AG04450 (cell line): ENCODE measurements at regions of chr7 and their contacts with region 1.

Region 1: GRCh38 chr7:87345166-87345927 is at the start of gene CROT:
- DNase-seq: peak; percentile 82
- H3K4me3 ChIP-seq: peak within 1 kb of the TSS; percentile 77
- H3K27ac ChIP-seq: peak within 1 kb of the TSS; percentile 71
- H3K27me3 ChIP-seq: no peaks in the 10 kb centered on the region
- CTCF ChIP-seq: no peak
- polyA plus RNA-seq, gene CROT: 32.3 and 48.3 TPM in 2 replicates

Region 2: GRCh38 chr7:87312215-87312865 is 33.0 kb before region 1 on chr7:
- CTCF ChIA-PET with region 1: interaction called, 3 read pairs
- POLR2A ChIA-PET with region 1: interaction called, 17 read pairs
- DNase-seq: peak; percentile 42
- H3K4me3 ChIP-seq: no peak overlapping the region
- H3K27ac ChIP-seq: no peak overlapping the region
- H3K27me3 ChIP-seq: no peaks in the 10 kb centered on the region
- CTCF ChIP-seq: peak; percentile 100